Activated naive CD4-positive, alpha-beta T cell treated with anti-CD3 and anti-CD28 coated beads for 36 hours (primary cell): ENCODE measurements at regions of chr4 and their contacts with region 1.

Region 1: GRCh38 chr4:38132107-38132673 is 172.0 kb downstream of the PTTG2 start:
- DNase-seq: peak; percentile 89
- H3K4me3 Mint-ChIP-seq: no peak overlapping the region
- H3K27ac Mint-ChIP-seq: peak overlapping the region; percentile 94
- H3K4me1 Mint-ChIP-seq: peaks cover 62% of the 10 kb centered on the region
- H3K27me3 Mint-ChIP-seq: no peaks in the 10 kb centered on the region

Region 2: DNA sequence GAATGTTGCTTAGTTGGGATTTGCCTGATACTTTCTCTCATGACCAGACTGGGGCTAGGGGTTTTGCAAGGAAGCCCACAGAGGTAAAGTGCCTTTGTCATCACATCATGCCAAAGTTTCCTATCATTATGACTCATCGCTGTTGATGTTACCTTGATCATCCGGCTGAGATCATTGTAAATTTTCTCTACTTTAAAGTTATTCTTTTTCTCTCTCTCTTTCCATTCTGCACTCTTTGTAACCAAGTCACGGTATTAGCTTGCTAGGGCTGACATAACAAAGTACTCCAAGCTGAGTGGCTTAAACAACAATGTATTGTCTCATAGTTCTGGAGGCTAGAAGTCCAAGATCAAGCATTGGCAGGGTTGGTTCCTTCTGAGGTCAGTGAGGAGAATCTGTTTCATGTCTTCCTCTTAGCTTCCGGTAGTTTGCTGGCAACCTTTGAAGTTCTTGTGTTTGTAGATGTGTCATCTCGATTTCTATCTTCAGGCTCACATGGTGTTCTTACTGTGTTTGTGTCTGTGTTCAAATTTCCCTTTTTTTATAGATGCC is 1737.8 kb before region 1 on chr4:
- CTCF ChIA-PET with region 1: no interaction called
- intact Hi-C with region 1: loop called (anchors 5 kb)
- DNase-seq: peak; percentile 63
- H3K4me3 Mint-ChIP-seq: peak overlapping the region; percentile 55
- H3K27ac Mint-ChIP-seq: peak overlapping the region; percentile 97
- H3K4me1 Mint-ChIP-seq: peaks cover 21% of the 10 kb centered on the region
- H3K27me3 Mint-ChIP-seq: no peaks in the 10 kb centered on the region

Region 3: GRCh38 chr4:38062088-38062893 is 69.9 kb before region 1 on chr4:
- CTCF ChIA-PET with region 1: no interaction called
- intact Hi-C with region 1: loop called (anchors 1 kb)
- DNase-seq: peak; percentile 84
- H3K4me3 Mint-ChIP-seq: peak overlapping the region; percentile 79
- H3K27ac Mint-ChIP-seq: peak overlapping the region; percentile 75
- H3K4me1 Mint-ChIP-seq: peaks cover 12% of the 10 kb centered on the region
- H3K27me3 Mint-ChIP-seq: no peaks in the 10 kb centered on the region

Region 4: GRCh38 chr4:38179690-38180377 is 47.6 kb after region 1 on chr4:
- CTCF ChIA-PET with region 1: interaction called, 7 read pairs
- intact Hi-C with region 1: loop called (anchors 1 kb)
- DNase-seq: peak; percentile 86
- H3K4me3 Mint-ChIP-seq: no peak overlapping the region
- H3K27ac Mint-ChIP-seq: no peak overlapping the region
- H3K4me1 Mint-ChIP-seq: peaks cover 33% of the 10 kb centered on the region
- H3K27me3 Mint-ChIP-seq: no peaks in the 10 kb centered on the region

Region 5: DNA sequence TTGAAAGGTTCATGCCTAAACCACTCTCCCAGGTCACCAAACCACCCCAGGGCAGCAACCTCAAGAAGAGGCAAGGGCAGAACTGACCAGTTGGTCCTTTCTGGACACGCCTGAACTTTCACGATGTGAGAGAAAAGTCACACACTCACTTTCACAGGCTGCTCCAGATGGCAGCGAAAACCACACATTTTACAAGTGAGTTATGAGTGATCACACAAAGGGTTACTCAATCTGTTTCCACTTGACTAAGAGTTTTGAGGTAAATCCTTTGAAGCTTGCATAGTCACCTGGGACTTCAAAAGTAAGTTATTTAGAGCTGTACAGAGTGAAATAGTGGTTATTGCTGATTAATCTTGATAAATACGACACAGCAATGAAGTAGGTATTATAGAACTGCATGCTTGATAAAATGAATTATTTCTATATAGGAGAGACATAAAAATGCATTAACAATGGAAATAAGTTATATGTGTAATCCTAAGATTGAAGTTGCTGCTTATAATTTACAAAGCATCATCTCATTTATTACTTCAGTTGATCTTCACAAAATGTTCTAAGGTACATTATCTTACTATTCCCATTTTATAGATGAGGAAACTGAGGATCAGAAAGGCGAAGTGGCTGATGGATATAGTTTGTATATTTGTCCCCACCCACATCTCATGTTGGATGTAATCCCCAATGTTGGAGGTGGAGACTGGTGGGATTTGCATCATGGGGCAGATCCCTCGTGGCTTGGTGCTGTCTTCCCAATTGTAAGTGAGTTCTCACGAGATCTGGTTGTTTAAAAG is 428.8 kb after region 1 on chr4:
- CTCF ChIA-PET with region 1: no interaction called
- intact Hi-C with region 1: loop called (anchors 1 kb)
- DNase-seq: peak; percentile 60
- H3K4me3 Mint-ChIP-seq: no peak overlapping the region
- H3K27ac Mint-ChIP-seq: no peak overlapping the region
- H3K4me1 Mint-ChIP-seq: peaks cover 16% of the 10 kb centered on the region
- H3K27me3 Mint-ChIP-seq: peaks cover 2% of the 10 kb centered on the region

Region 6: GRCh38 chr4:38889143-38889542 is 757.0 kb after region 1 on chr4:
- CTCF ChIA-PET with region 1: no interaction called
- intact Hi-C with region 1: loop called (anchors 1 kb)
- DNase-seq: no peak
- H3K4me3 Mint-ChIP-seq: peak overlapping the region; percentile 46
- H3K27ac Mint-ChIP-seq: peak overlapping the region; percentile 88
- H3K4me1 Mint-ChIP-seq: peaks cover 23% of the 10 kb centered on the region
- H3K27me3 Mint-ChIP-seq: no peaks in the 10 kb centered on the region